ENCODE measurements at regions of chr15 and their contacts with region 1.

Region 1: GRCh38 chr15:55897560-55898336 is 95.7 kb downstream of the NEDD4 start:
- DNase-seq: no peak
- ATAC-seq: peak; percentile 97
- H3K4me3 ChIP-seq: no peak overlapping the region
- H3K27ac ChIP-seq: peak overlapping the region; percentile 34
- H3K4me1 ChIP-seq: peaks cover 8 to 9% of the 10 kb centered on the region in 2 experiments
- H3K27me3 ChIP-seq: no peaks in the 10 kb centered on the region
- CTCF ChIP-seq: peak; percentile 55 to 94 (median 93); a peak in 5 of 6 replicates
- POLR2A ChIP-seq: no peak
- RAD21 ChIP-seq: peak; percentile 60

Region 2: DNA sequence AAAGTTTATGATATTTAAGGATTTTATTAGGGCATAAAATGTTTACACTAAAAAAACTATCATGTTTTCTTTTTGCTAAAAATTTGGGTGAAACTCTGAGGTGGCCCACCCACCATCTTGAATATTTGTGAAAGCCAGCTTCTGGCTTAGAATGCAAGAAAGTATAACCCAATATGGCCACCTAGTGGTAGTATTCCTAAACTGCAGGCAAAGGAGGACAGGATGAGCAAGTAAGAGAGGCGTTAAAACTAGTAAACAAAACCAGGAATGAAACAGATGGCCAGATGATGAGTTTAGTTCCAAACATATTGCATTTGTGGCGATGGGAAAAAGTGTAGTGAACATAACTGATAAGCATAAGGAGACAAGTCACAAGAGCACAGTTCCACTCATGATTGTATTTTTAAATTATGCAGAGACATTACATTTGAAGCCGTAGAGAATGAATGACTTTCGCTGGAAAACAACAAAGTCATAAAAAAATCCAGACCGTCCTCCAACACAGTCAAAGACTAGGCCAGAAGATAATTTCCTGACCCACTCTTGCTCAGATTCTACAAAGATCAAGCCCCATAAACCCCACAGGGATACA is 51.5 kb before region 1 on chr15:
- CTCF ChIA-PET with region 1: interaction called, 11 read pairs
- POLR2A ChIA-PET with region 1: no interaction called
- RAD21 ChIA-PET with region 1: no interaction called
- intact Hi-C with region 1: no loop called
- DNase-seq: peak; percentile 57
- ATAC-seq: peak; percentile 84
- H3K4me3 ChIP-seq: no peak overlapping the region
- H3K27ac ChIP-seq: no peak overlapping the region
- H3K4me1 ChIP-seq: no peaks in the 10 kb centered on the region
- H3K27me3 ChIP-seq: no peaks in the 10 kb centered on the region
- CTCF ChIP-seq: peak; percentile 53 to 94 (median 84); a peak in 5 of 6 replicates
- POLR2A ChIP-seq: no peak
- RAD21 ChIP-seq: peak; percentile 67

Region 3: DNA sequence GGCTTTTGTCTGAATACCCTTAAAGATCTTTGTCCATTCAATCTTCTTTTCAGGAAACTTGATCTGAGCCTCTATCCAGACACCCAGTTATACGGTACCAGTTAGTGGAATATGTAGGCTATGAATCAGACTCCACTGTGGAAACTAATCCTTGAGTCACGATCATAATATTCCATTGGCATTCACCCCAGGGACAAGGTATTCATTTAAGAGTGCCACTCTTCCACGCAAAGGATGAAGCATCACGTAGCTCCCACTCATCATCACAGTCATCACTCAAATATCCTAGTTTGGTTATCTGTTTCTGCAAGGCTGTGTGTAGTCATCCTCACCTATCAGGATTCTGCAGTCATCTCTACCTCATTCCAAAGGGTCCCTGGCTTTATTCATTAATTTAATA is 10.0 kb after region 1 on chr15:
- CTCF ChIA-PET with region 1: interaction called, 11 read pairs
- POLR2A ChIA-PET with region 1: no interaction called
- RAD21 ChIA-PET with region 1: no interaction called
- intact Hi-C with region 1: no loop called
- DNase-seq: peak; percentile 86
- ATAC-seq: peak; percentile 96
- H3K4me3 ChIP-seq: peak overlapping the region in 1 of 2 experiments; percentile 27; a peak in 2 of 4 replicates
- H3K27ac ChIP-seq: peak overlapping the region; percentile 50; the same call in 1 of the 2 replicates
- H3K4me1 ChIP-seq: peaks cover 10 to 33% of the 10 kb centered on the region in 2 experiments
- H3K27me3 ChIP-seq: no peaks in the 10 kb centered on the region
- CTCF ChIP-seq: no peak
- POLR2A ChIP-seq: no peak
- RAD21 ChIP-seq: no peak

Region 4: DNA sequence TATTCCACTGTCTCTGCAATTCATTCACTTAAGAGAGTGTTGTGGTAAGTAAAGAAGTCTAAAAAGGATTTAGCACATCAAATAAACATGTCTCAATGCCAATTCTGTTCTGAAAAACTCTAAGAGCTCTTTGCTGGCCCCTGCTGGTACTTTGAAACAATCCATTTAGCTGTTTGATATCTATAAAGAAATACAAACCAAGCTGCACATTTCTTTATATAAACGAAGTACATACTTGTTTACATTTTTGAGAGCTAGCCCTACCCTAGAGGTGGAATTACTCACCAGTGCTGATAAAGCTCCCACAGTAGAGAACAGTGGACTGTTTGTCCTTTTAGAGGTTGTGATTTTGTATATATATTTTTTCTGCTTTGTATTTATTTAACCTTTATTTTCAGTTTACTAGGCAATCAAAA is 20.1 kb after region 1 on chr15:
- CTCF ChIA-PET with region 1: interaction called, 23 read pairs
- POLR2A ChIA-PET with region 1: no interaction called
- RAD21 ChIA-PET with region 1: interaction called in 1 of 2 experiments, 5 read pairs
- intact Hi-C with region 1: no loop called
- DNase-seq: peak; percentile 35
- ATAC-seq: peak; percentile 73
- H3K4me3 ChIP-seq: no peak overlapping the region
- H3K27ac ChIP-seq: no peak overlapping the region
- H3K4me1 ChIP-seq: peaks cover 6% of the 10 kb centered on the region in 2 experiments; a peak in 3 of 4 replicates
- H3K27me3 ChIP-seq: no peaks in the 10 kb centered on the region
- CTCF ChIP-seq: peak; percentile 32 to 65 (median 63); a peak in 5 of 6 replicates
- POLR2A ChIP-seq: no peak
- RAD21 ChIP-seq: peak; percentile 35

Region 5: GRCh38 chr15:56052395-56053045 is 154.8 kb after region 1 on chr15:
- CTCF ChIA-PET with region 1: interaction called, 6 read pairs
- POLR2A ChIA-PET with region 1: no interaction called
- RAD21 ChIA-PET with region 1: no interaction called
- intact Hi-C with region 1: loop called (anchors 10 kb)
- DNase-seq: peak; percentile 57
- ATAC-seq: peak; percentile 86
- H3K4me3 ChIP-seq: no peak overlapping the region
- H3K27ac ChIP-seq: no peak overlapping the region
- H3K4me1 ChIP-seq: no peaks in the 10 kb centered on the region
- H3K27me3 ChIP-seq: no peaks in the 10 kb centered on the region
- CTCF ChIP-seq: peak; percentile 57 to 78 (median 63); a peak in 5 of 6 replicates
- POLR2A ChIP-seq: no peak
- RAD21 ChIP-seq: peak; percentile 74